ENCODE measurements at regions of chr1 and their contacts with region 1.

Region 1: DNA sequence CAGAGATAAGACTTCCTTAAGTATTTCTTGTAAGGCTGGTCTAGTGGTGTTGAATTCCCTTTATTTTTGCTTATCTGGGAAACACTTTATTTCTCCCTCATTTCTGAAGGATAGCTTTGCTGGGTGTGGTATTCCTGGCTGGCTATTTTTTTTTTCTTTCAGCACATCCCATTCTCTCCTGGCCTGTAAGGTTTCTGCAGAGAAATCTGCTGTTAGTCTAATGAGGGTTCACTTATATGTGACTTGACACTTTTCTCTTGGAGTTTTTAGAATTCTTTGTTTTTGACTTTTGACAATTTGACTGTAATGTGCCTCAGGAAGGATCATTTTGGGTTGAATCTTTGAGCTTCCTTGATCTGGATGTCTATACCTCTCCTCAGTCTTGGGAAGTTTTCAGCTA is 61.5 kb downstream of the DIPK1A start:
- DNase-seq: no peak
- ATAC-seq: no peak
- H3K4me3 ChIP-seq: no peak overlapping the region
- H3K4me3 Mint-ChIP-seq: no peak overlapping the region
- H3K27ac ChIP-seq: no peak overlapping the region
- H3K27ac Mint-ChIP-seq: no peak overlapping the region
- H3K4me1 ChIP-seq: peaks cover 12% of the 10 kb centered on the region
- H3K4me1 Mint-ChIP-seq: peaks cover 18% of the 10 kb centered on the region
- H3K27me3 ChIP-seq: no peaks in the 10 kb centered on the region
- H3K27me3 Mint-ChIP-seq: no peaks in the 10 kb centered on the region
- CTCF ChIP-seq: no peak

Region 2: DNA sequence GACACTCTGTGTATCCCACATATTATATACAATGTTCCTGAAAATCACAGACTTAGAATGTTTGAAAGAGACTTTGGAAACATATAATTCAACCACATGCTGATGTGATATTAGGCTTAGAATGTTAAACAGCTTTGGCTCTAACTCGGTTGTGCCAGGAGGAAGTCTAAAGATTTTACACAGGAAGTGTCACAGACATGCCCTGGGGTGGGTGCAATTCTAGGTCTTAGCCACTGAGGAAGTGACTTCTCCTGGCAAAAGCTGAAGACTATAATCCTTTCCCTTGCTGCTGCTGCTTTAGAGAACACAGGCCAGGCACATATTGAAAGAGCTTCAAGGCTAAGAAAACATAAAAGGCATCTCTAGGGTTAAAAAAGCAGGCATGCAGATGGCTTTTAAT is 17.0 kb before region 1 on chr1:
- CTCF ChIA-PET with region 1: interaction called, 3 read pairs
- POLR2A ChIA-PET with region 1: interaction called, 3 read pairs
- intact Hi-C with region 1: loop called in 1 of 2 experiments (anchors 2 kb)
- DNase-seq: peak in 8 of 9 experiments; percentile 30 to 81 (median 56)
- ATAC-seq: peak; percentile 94
- H3K4me3 ChIP-seq: no peak overlapping the region
- H3K4me3 Mint-ChIP-seq: peak overlapping the region; percentile 42
- H3K27ac ChIP-seq: peak overlapping the region; percentile 3 to 80
- H3K27ac Mint-ChIP-seq: peak overlapping the region; percentile 96
- H3K4me1 ChIP-seq: peaks cover 19% of the 10 kb centered on the region
- H3K4me1 Mint-ChIP-seq: peaks cover 43% of the 10 kb centered on the region
- H3K27me3 ChIP-seq: no peaks in the 10 kb centered on the region
- H3K27me3 Mint-ChIP-seq: no peaks in the 10 kb centered on the region
- CTCF ChIP-seq: no peak

Measured in CD8-positive, alpha-beta T cell (primary cell).